Caco-2 (cell line): ENCODE measurements at regions of chr5 and their contacts with region 1.

Region 1: DNA sequence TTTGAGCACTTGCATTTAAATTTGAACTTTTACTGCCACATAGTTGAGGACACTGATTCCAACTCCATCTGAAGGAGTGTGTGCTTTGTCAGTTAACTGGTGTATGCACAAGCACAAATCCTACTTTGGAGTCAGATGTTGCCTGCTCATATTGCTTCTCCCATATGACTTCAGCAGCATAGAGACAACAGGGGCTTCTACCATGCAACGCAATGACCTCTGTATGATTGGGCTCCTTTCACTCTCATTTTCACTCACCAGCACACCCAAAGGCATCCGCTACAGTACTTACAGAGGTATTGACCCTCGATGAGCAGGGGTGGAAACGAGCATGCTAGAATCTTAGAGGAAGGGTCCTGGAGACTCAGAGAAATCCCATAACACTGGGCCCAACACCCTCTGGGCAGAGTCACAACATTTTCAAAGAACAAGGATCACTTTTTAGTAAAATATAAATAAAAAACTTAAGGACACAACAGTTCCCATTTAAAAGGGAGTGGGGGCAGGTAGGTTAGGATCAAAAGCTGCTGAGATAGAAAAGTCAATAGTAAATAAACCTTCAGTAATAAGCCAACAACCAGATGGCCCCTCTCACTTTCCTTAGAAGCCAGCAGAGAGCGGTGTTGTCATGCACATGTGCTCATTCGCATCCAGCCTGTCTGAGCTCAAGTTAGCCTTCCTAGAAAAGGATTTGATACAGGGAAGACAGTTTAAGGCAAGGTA is 203.8 kb downstream of the SNCAIP start:
- DNase-seq: peak; percentile 68 to 71
- H3K4me3 ChIP-seq: peak overlapping the region; percentile 26
- H3K4me3 Mint-ChIP-seq: peak overlapping the region; percentile 91
- H3K27ac Mint-ChIP-seq: peak overlapping the region; percentile 90
- H3K4me1 ChIP-seq: peaks cover 7% of the 10 kb centered on the region
- H3K4me1 Mint-ChIP-seq: no peaks in the 10 kb centered on the region
- H3K27me3 ChIP-seq: no peaks in the 10 kb centered on the region
- H3K27me3 Mint-ChIP-seq: peaks cover 4% of the 10 kb centered on the region
- CTCF ChIP-seq: peak; percentile 72 to 83

Region 2: DNA sequence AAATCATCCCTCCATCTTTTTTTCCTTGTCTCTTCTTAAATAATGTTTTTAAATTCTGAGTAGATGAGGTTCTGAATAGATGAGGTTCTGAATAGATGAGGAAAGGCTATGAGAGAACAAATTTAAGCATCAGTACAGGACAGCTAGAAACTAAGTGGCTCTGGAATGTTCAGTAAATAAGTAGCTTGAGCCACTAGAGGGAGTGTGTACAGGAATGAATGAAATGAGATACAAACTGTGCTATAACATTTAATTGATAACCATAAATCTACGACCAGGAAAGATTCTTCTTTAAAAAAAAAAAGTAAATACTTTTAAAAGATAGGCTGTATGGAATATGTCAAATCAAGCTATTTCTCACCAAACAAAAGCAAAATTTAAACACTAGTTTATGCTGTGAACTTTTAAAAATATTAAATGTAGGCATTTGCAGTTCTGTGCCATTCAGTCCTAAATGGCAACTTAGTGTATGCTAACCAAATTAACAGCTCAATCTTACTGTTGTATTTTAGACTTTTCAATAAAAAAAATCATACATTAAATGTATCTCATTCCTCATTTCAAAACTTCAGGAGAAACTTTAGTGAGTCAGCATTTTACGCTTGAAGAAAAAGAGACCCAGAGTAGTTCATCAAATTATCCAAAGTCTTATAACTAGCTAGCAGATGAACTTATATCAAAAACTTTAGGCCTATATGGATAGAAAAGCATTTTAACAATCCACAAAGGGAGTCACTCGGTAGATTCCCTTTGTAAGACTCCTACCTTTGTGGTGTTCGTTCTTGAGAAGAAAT is 188.6 kb after region 1 on chr5:
- CTCF ChIA-PET with region 1: interaction called, 12 read pairs
- POLR2A ChIA-PET with region 1: no interaction called
- intact Hi-C with region 1: loop called (anchors 2 kb)
- DNase-seq: peak in 1 of 2 experiments; percentile 48
- H3K4me3 ChIP-seq: no peak overlapping the region
- H3K4me3 Mint-ChIP-seq: no peak overlapping the region
- H3K27ac Mint-ChIP-seq: no peak overlapping the region
- H3K4me1 ChIP-seq: peaks cover 19% of the 10 kb centered on the region
- H3K4me1 Mint-ChIP-seq: peaks cover 8% of the 10 kb centered on the region
- H3K27me3 ChIP-seq: no peaks in the 10 kb centered on the region
- H3K27me3 Mint-ChIP-seq: no peaks in the 10 kb centered on the region
- CTCF ChIP-seq: peak; percentile 71 to 75

Region 3: GRCh38 chr5:122896598-122897282 is 380.9 kb after region 1 on chr5:
- CTCF ChIA-PET with region 1: no interaction called
- POLR2A ChIA-PET with region 1: no interaction called
- intact Hi-C with region 1: loop called (anchors 2 kb)
- DNase-seq: peak in 1 of 2 experiments; percentile 20
- H3K4me3 ChIP-seq: no peak overlapping the region
- H3K4me3 Mint-ChIP-seq: no peak overlapping the region
- H3K27ac Mint-ChIP-seq: no peak overlapping the region
- H3K4me1 ChIP-seq: peaks cover 7% of the 10 kb centered on the region
- H3K4me1 Mint-ChIP-seq: peaks cover 6% of the 10 kb centered on the region
- H3K27me3 ChIP-seq: no peaks in the 10 kb centered on the region
- H3K27me3 Mint-ChIP-seq: no peaks in the 10 kb centered on the region
- CTCF ChIP-seq: peak; percentile 69 to 70

Region 4: GRCh38 chr5:123119334-123119986 is 603.6 kb after region 1 on chr5:
- CTCF ChIA-PET with region 1: interaction called, 4 read pairs
- POLR2A ChIA-PET with region 1: no interaction called
- intact Hi-C with region 1: loop called (anchors 2 kb)
- DNase-seq: peak; percentile 90 to 93
- H3K4me3 ChIP-seq: no peak overlapping the region
- H3K4me3 Mint-ChIP-seq: peak overlapping the region; percentile 64
- H3K27ac Mint-ChIP-seq: peak overlapping the region; percentile 68
- H3K4me1 ChIP-seq: peaks cover 11% of the 10 kb centered on the region
- H3K4me1 Mint-ChIP-seq: peaks cover 26% of the 10 kb centered on the region
- H3K27me3 ChIP-seq: no peaks in the 10 kb centered on the region
- H3K27me3 Mint-ChIP-seq: no peaks in the 10 kb centered on the region
- CTCF ChIP-seq: peak; percentile 35 to 79

Region 5: DNA sequence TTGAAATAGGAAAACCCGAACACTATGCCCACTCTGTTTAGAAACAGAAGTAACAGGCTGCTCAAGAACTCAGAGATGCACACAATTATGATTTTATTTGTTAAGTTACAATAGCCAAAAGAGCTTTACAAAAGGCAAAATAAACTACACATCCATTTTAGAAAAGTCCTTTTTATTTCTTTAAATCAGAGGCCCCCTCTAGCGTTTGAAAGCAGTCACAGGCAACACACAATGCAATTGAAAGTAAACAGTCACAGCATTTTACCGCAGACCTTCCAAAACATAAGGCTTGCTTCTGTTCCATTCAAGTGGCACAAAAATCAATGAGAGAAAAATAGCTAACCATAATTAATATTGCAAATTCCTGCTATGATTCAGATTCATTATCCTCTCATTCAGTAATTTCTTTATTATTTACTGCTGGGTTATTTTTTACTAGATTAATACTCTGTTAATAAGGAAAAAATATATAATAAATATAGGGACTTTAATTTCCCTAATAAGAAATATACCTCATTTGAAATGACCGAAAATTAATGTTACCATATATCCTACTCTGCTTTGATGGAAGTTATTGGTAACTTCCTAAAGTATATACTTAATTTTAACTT is 829.1 kb after region 1 on chr5:
- CTCF ChIA-PET with region 1: interaction called, 3 read pairs
- POLR2A ChIA-PET with region 1: no interaction called
- intact Hi-C with region 1: loop called (anchors 2 kb)
- DNase-seq: peak in 1 of 2 experiments; percentile 22
- H3K4me3 ChIP-seq: no peak overlapping the region
- H3K4me3 Mint-ChIP-seq: no peak overlapping the region
- H3K27ac Mint-ChIP-seq: no peak overlapping the region
- H3K4me1 ChIP-seq: 0 out of 2 replicates have a peak, but pooled peaks cover 4% of the 10 kb centered on the region
- H3K4me1 Mint-ChIP-seq: no peaks in the 10 kb centered on the region
- H3K27me3 ChIP-seq: no peaks in the 10 kb centered on the region
- H3K27me3 Mint-ChIP-seq: no peaks in the 10 kb centered on the region
- CTCF ChIP-seq: peak; percentile 46 to 64

Region 6: GRCh38 chr5:123423278-123424149 is 907.6 kb after region 1 on chr5 and contains the start of gene CEP120:
- CTCF ChIA-PET with region 1: interaction called, 7 read pairs
- POLR2A ChIA-PET with region 1: no interaction called
- intact Hi-C with region 1: loop called (anchors 2 kb)
- DNase-seq: peak; percentile 97 to 98
- H3K4me3 ChIP-seq: peak within 1 kb of the TSS; percentile 82
- H3K4me3 Mint-ChIP-seq: no peak within 1 kb of the TSS
- H3K27ac Mint-ChIP-seq: no peak within 1 kb of the TSS
- H3K4me1 ChIP-seq: peaks cover 6% of the 10 kb centered on the region
- H3K4me1 Mint-ChIP-seq: peaks cover 2% of the 10 kb centered on the region
- H3K27me3 ChIP-seq: no peaks in the 10 kb centered on the region
- H3K27me3 Mint-ChIP-seq: no peaks in the 10 kb centered on the region
- CTCF ChIP-seq: peak; percentile 63 to 92
- total RNA-seq, gene CEP120: 24.4 and 25.8 TPM in 2 replicates